ENCODE measurements at regions of chr9 and their contacts with region 1.

Region 1: DNA sequence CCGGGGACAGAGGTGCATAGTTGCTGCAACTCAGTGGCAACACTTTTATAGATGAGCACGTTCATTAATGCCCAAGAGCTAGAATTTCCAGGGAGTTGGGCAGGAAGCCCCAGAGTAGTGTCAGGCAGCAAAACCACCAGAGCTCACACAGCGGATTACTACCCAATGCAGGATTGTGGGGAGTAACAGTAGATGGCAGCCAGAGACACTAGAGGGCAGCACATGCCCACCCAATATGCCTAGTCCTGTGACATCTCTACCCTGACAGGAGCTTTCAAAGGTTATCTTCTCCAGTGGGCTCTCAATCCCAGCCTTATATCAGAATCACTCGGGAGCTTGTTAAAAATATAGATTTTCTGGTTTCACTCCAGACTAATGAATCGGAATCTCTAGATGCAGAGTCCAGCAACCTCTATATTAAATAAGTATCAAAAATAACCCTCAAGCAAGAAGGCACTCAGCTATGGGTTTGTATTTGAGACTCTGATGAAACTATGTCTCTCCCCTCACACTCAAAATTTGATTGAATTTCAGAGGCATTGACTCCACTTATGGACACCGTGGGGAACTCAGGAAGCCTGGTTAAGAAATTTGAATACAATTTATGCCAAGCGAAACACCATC is 58.4 kb upstream of the PHF24 start:
- DNase-seq: peak; percentile 31 to 86
- H3K4me3 ChIP-seq: no peak overlapping the region
- H3K27ac ChIP-seq: no peak overlapping the region
- H3K4me1 ChIP-seq: no peaks in the 10 kb centered on the region
- H3K27me3 ChIP-seq: peaks cover 0 to 3% (median 0%) of the 10 kb centered on the region in 4 experiments; a peak in 1 of 7 replicates
- CTCF ChIP-seq: peak; percentile 84 to 93 (median 91)
- EP300 ChIP-seq: no peak
- POLR2A ChIP-seq: no peak
- RAD21 ChIP-seq: peak; percentile 98 to 99

Region 2: DNA sequence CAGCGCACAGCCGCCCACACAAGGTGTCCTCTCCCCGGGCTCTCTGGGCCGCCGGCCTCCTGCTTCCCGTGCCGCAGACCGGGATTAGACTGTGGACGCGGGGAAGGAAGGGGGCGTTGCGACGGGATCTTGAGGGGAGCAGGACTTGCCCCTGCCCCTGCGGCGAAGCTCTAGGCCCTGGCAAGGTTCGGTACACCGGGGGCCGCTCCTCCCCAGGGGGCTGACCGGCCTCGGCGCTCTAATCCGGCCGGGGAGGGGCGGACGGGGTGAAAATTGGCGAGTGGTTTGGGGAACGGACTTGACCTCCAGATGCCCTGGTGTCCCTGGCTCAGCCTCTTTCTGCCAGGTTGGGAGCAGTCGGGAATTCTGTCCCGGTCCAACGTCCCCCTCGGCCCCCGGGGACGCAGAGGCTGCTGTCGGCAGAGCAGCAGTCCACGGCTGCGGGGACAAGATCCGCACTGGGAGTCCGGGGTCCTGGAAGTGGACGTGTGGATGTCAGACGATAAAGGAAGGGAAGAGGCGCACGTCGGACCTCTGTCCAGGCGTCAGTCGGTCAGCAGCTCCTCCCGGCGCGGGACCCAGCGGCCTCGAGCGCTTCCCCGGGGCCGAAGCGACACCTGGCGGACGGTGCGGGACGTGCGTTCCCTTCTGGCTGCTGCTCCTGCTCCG is 308.3 kb before region 1 on chr9:
- CTCF ChIA-PET with region 1: no interaction called
- POLR2A ChIA-PET with region 1: no interaction called
- DNase-seq: peak in 1 of 2 experiments; percentile 98
- H3K4me3 ChIP-seq: peak overlapping the region in 2 of 4 experiments; percentile 51 to 74; a peak in 4 of 8 replicates
- H3K27ac ChIP-seq: no peak overlapping the region
- H3K4me1 ChIP-seq: peaks cover 4 to 30% (median 16%) of the 10 kb centered on the region in 4 experiments
- H3K27me3 ChIP-seq: peaks cover 67 to 80% (median 75%) of the 10 kb centered on the region in 4 experiments
- CTCF ChIP-seq: peak; percentile 92 to 98 (median 96)
- EP300 ChIP-seq: no peak
- POLR2A ChIP-seq: no peak
- RAD21 ChIP-seq: peak; percentile 91 to 93

Region 3: DNA sequence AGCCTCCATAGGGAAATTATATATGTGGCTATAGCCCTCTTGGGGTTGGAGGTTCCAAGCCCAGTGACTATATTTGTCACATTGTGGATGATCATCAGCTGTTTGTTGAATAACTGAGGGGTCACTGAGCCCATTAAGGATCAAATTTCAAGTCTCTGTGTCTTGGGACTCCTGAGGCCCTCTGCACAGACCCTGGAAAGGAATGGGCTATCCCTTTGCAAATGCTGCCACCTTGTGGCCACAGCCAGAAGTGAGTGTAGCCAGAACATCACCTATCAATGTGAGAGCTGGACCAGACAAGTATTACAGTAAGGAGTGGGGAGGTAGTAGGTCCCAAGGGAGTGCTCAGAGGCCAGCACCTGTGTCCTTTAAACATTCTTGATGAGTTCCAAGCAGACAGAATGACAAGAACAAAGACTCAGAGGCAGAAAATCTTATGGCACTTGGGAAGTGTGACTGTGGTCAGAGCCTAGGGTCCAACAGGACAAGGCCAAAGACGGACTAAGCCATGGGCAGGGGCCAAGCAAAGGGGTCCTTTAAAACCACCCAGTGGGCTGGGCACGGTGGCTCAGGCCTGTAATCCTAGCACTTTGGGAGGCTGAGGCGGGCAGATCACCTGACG is 295.9 kb before region 1 on chr9:
- CTCF ChIA-PET with region 1: no interaction called
- POLR2A ChIA-PET with region 1: no interaction called
- DNase-seq: peak in 1 of 2 experiments; percentile 96
- H3K4me3 ChIP-seq: no peak overlapping the region
- H3K27ac ChIP-seq: no peak overlapping the region
- H3K4me1 ChIP-seq: peaks cover 0 to 5% (median 2%) of the 10 kb centered on the region in 4 experiments; a peak in 2 of 7 replicates
- H3K27me3 ChIP-seq: peaks cover 0 to 3% (median 0%) of the 10 kb centered on the region in 4 experiments; a peak in 2 of 7 replicates
- CTCF ChIP-seq: peak; percentile 77 to 96 (median 96)
- EP300 ChIP-seq: no peak
- POLR2A ChIP-seq: no peak
- RAD21 ChIP-seq: peak; percentile 99

Region 4: GRCh38 chr9:34823786-34824185 is 75.9 kb before region 1 on chr9:
- CTCF ChIA-PET with region 1: no interaction called
- POLR2A ChIA-PET with region 1: no interaction called
- DNase-seq: no peak
- H3K4me3 ChIP-seq: no peak overlapping the region
- H3K27ac ChIP-seq: no peak overlapping the region
- H3K4me1 ChIP-seq: no peaks in the 10 kb centered on the region
- H3K27me3 ChIP-seq: no peaks in the 10 kb centered on the region; a peak in 2 of 7 replicates
- CTCF ChIP-seq: no peak
- EP300 ChIP-seq: no peak
- POLR2A ChIP-seq: no peak
- RAD21 ChIP-seq: no peak

Region 5: DNA sequence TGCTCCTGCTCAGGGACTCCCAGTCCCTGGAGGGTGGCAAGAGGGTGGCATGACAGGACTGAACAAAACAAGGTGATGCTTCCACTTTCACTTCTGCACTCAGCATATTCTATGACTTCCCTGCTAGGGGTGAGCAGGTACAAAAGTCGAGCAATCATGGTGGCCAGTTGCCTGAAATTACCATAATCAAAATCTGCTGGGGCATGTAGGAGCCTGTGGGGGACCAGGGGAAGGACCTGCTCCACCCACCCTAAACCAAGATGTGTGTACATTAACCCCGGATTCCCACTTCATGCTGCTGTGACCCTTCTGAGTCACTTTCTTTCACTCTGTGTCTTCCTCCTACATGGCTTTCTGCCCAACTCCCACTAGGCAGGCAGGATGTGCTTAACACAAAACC is 14.9 kb before region 1 on chr9:
- CTCF ChIA-PET with region 1: interaction called, 37 read pairs
- POLR2A ChIA-PET with region 1: no interaction called
- DNase-seq: no peak
- H3K4me3 ChIP-seq: no peak overlapping the region
- H3K27ac ChIP-seq: no peak overlapping the region
- H3K4me1 ChIP-seq: no peaks in the 10 kb centered on the region
- H3K27me3 ChIP-seq: no peaks in the 10 kb centered on the region
- CTCF ChIP-seq: no peak
- EP300 ChIP-seq: no peak
- POLR2A ChIP-seq: no peak
- RAD21 ChIP-seq: no peak

Region 6: GRCh38 chr9:34957492-34958410 is 58.1 kb after region 1 on chr9 and contains the start of gene PHF24:
- CTCF ChIA-PET with region 1: interaction called, 37 read pairs
- POLR2A ChIA-PET with region 1: no interaction called
- DNase-seq: peak in 1 of 2 experiments; percentile 64
- H3K4me3 ChIP-seq: peak within 1 kb of the TSS; percentile 41 to 67 (median 48)
- H3K27ac ChIP-seq: no peak within 1 kb of the TSS
- H3K4me1 ChIP-seq: peaks cover 0 to 3% (median 1%) of the 10 kb centered on the region in 4 experiments; a peak in 6 of 7 replicates
- H3K27me3 ChIP-seq: peaks cover 1 to 22% (median 9%) of the 10 kb centered on the region in 4 experiments; a peak in 6 of 7 replicates
- CTCF ChIP-seq: peak in 2 of 3 experiments; percentile 6 to 10; a peak in 2 of 4 replicates
- EP300 ChIP-seq: no peak
- POLR2A ChIP-seq: no peak
- RAD21 ChIP-seq: peak in 1 of 2 experiments; percentile 22; a peak in 1 of 4 replicates
- total RNA-seq, gene PHF24: 0.35 and 1.0 TPM in 2 replicates

Region 7: GRCh38 chr9:34989003-34989945 is 89.6 kb after region 1 on chr9 and contains the start of gene DNAJB5:
- CTCF ChIA-PET with region 1: interaction called, 148 read pairs
- POLR2A ChIA-PET with region 1: interaction called, 8 read pairs
- DNase-seq: peak; percentile 98 to 100
- H3K4me3 ChIP-seq: peak within 1 kb of the TSS; percentile 65 to 94 (median 74)
- H3K27ac ChIP-seq: peak within 1 kb of the TSS; percentile 90
- H3K4me1 ChIP-seq: peaks cover 17 to 46% (median 34%) of the 10 kb centered on the region in 4 experiments
- H3K27me3 ChIP-seq: no peaks in the 10 kb centered on the region
- CTCF ChIP-seq: no peak
- EP300 ChIP-seq: no peak
- POLR2A ChIP-seq: peak; percentile 47 to 64
- RAD21 ChIP-seq: no peak
- total RNA-seq, gene DNAJB5: 34.1 and 38.0 TPM in 2 replicates

Region 8: DNA sequence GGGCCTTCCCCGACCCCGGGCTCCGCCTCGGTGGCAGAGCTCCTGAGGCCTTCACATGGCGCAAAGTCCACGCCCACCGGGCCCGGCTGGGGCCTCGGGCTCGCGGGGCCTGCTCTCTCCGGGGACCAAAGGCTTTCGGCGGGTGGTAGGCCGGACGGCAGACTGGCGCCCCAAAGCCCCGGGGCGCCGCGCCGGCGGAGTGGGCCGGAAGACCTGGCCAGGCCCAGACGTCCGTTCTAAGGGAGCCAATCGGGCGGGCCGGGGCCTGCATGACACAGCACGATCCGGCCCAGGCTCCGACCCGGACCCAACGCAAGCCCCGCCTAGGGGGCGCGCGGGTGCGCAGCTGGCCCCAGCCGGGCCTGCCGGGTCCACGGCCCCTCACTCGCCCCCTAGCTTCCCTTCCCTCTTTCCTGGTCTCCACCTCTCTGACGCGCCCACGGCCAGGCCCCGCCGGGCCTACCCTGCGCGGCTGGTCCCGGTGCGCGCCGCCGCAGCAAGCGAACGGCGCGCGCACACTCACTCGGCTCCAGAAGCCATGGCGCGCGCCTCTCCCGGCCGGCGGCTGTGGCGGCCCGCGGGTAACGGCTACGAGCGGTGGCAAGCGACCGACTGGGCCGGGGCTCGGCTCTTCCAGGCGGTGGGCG is 172.3 kb after region 1 on chr9:
- CTCF ChIA-PET with region 1: interaction called, 15 read pairs
- POLR2A ChIA-PET with region 1: interaction called, 4 read pairs
- DNase-seq: peak; percentile 59 to 89
- H3K4me3 ChIP-seq: peak overlapping the region; percentile 75 to 94 (median 87)
- H3K27ac ChIP-seq: peak overlapping the region; percentile 93
- H3K4me1 ChIP-seq: peaks cover 4 to 12% (median 7%) of the 10 kb centered on the region in 4 experiments
- H3K27me3 ChIP-seq: no peaks in the 10 kb centered on the region
- CTCF ChIP-seq: peak; percentile 26 to 48 (median 45); a peak in 3 of 4 replicates
- EP300 ChIP-seq: no peak
- POLR2A ChIP-seq: peak in 1 of 2 experiments; percentile 90; a peak in 1 of 3 replicates
- RAD21 ChIP-seq: peak in 1 of 2 experiments; percentile 8; a peak in 1 of 4 replicates